ENCODE measurements at regions of chr10 and their contacts with region 1.

Region 1: DNA sequence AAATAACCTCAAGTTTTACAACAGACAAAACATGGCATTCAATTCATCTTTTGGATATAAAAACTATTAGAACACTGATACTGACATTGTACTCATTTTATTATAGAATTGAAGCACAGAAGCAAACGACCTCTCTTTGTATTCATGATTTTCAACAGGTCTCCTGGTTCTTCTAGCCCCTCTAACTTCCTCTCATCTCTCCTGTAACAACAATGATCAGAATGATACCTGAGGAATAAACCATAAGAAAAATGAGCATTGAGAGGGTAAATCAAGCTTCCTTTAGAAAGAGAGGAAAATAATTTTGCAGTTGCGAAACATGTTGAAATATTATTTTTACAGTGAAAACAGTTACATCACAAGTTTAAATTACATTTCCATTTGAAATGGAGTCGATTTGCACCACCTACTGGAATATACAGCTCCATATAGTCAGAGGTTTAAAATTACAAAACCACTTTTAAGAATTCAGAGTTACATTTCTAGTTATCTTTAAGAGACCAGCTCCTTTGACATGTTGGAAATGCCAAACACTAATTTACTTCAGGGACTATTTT is 17.5 kb upstream of the TEX36 start:
- DNase-seq: no peak
- H3K4me3 ChIP-seq: no peak overlapping the region
- H3K27ac ChIP-seq: no peak overlapping the region
- H3K4me1 ChIP-seq: peaks cover under 1 to 5% of the 10 kb centered on the region in 2 experiments; a peak in 3 of 4 replicates
- H3K27me3 ChIP-seq: no peaks in the 10 kb centered on the region
- CTCF ChIP-seq: peak; percentile 49
- EP300 ChIP-seq: no peak
- RAD21 ChIP-seq: peak; percentile 70

Region 2: DNA sequence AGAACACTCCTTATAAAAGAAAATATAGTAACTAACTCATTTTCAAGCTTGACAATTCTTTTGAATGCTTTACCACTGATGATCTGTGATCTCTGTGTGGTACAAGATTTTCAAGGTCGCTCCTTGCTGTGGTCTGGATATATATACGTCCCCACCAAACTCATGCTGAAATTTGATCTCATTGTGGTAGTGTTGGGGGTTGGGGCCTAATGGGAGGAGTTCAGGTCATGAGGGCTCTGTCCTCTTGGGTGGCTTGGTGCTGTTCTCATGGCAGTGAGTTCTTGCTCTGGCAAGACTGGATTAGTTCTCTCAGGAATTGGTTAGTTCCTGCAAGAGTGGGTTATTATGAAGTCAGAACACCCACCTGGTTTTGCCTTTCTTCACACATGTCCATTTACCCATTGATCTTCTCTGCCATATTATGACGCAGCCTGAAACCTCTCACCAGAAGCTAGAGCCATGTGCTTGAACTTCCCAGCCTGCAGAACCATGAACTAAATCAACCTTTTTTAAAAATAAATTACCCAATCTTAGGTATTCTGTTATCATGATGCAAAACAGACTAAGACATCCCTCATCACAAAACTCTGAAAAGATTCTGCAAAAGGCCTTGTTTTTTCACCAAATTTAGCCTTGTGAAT is 10.8 kb after region 1 on chr10:
- CTCF ChIA-PET with region 1: interaction called, 12 read pairs
- POLR2A ChIA-PET with region 1: no interaction called
- DNase-seq: no peak
- H3K4me3 ChIP-seq: no peak overlapping the region
- H3K27ac ChIP-seq: no peak overlapping the region
- H3K4me1 ChIP-seq: peaks cover 0 to 2% of the 10 kb centered on the region in 2 experiments; a peak in 1 of 4 replicates
- H3K27me3 ChIP-seq: no peaks in the 10 kb centered on the region
- CTCF ChIP-seq: no peak
- EP300 ChIP-seq: no peak
- RAD21 ChIP-seq: no peak